SK-N-SH (cell line): ENCODE measurements at regions of chr11 and their contacts with region 1.

Region 1: GRCh38 chr11:117946842-117947526 is 17.8 kb upstream of the TMPRSS13 start:
- DNase-seq: peak; percentile 85
- H3K4me3 ChIP-seq: peak overlapping the region in 1 of 2 experiments; percentile 39; a peak in 1 of 4 replicates
- H3K27ac ChIP-seq: no peak overlapping the region
- H3K4me1 ChIP-seq: no peaks in the 10 kb centered on the region; a peak in 1 of 4 replicates
- H3K27me3 ChIP-seq: no peaks in the 10 kb centered on the region; the same call in 1 of the 2 replicates
- CTCF ChIP-seq: peak; percentile 96
- EP300 ChIP-seq: no peak
- RAD21 ChIP-seq: peak; percentile 99

Region 2: DNA sequence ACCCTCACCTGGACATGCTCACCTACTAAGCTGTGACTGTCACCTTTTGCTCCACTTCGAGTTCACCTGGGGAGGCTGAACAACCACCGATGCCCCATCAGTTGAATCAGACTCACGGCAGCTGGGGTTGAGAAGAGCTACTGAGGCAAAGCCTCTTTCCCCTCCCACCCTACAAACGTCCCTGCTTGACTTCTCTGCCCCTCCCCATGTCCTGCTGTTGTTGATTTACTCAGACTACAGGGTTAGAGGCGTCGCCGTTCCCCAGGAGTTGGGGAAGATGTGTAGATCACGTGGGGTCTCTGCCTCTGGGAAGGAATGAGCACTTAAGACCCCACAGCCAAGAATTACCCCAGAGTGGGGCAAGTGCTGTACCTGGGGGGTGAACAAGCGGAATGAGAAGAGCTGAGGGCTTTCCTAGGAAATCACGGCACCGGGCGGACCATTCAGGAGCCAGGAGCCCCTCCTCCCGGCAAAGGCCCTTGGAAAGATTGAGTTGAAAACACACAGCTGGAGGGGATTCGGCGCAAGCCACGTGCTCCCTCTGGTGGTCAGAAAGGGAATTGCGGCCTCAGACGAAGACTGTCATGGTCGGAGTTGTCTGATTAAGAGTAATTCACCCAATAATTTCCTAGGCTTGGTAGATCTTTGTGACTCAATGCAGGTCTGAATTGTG is 129.5 kb before region 1 on chr11:
- CTCF ChIA-PET with region 1: interaction called, 481 read pairs
- POLR2A ChIA-PET with region 1: no interaction called
- DNase-seq: peak; percentile 83
- H3K4me3 ChIP-seq: peak overlapping the region in 1 of 2 experiments; percentile 33; a peak in 1 of 4 replicates
- H3K27ac ChIP-seq: no peak overlapping the region
- H3K4me1 ChIP-seq: peaks cover 8 to 28% of the 10 kb centered on the region in 2 experiments; a peak in 2 of 4 replicates
- H3K27me3 ChIP-seq: no peaks in the 10 kb centered on the region
- CTCF ChIP-seq: peak; percentile 98
- EP300 ChIP-seq: no peak
- RAD21 ChIP-seq: peak; percentile 92

Region 3: DNA sequence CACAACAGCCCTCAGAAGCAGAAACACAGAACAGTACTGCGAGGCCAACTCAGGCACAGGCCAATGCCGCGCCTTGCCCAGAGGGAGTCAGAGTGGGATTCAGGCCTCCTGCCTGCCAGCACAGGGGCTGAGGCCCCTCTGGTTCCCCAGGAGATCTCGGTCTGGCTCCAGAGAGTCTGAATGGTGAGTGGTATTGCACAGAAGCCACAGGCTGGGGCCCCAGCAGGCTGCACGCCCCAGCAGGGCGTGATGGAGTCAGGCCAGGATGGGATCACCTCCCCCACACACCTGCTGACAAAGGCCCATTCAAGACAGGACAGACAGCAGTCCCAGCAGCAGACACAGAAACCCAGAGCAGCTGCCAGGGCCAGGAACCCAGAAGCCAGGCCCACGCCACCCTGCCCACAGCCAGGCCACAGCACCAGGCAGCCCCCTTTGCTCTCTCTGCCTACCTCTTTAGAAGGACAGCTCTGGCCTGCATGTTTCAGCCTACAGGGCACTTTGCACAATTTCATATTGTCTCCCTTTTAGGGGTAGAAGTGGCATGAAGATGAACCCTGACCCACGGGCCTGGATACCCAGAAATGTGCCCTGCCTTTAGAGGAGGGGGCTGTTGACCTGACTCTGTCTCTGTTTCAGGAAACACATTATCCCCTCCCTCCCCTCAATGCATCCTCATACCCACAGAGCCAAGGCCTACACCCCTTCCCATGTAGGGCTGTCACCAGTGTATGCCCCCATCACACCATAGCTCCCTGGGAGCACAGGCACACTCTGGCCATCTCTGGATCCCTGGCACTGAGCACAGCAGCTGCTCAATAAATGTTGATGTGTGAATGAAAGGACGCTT is 76.7 kb before region 1 on chr11:
- CTCF ChIA-PET with region 1: interaction called, 31 read pairs
- POLR2A ChIA-PET with region 1: no interaction called
- DNase-seq: peak; percentile 52
- H3K4me3 ChIP-seq: no peak overlapping the region
- H3K27ac ChIP-seq: peak overlapping the region in 1 of 2 experiments; percentile 81; a peak in 2 of 4 replicates
- H3K4me1 ChIP-seq: peaks cover 0 to 48% of the 10 kb centered on the region in 2 experiments; a peak in 1 of 4 replicates
- H3K27me3 ChIP-seq: peaks cover 17% of the 10 kb centered on the region; the same call in 1 of the 2 replicates
- CTCF ChIP-seq: no peak
- EP300 ChIP-seq: no peak
- RAD21 ChIP-seq: no peak

Region 4: GRCh38 chr11:117907251-117907981 is 39.6 kb before region 1 on chr11:
- CTCF ChIA-PET with region 1: interaction called, 36 read pairs
- POLR2A ChIA-PET with region 1: no interaction called
- DNase-seq: peak; percentile 74
- H3K4me3 ChIP-seq: no peak overlapping the region
- H3K27ac ChIP-seq: no peak overlapping the region
- H3K4me1 ChIP-seq: peaks cover 5 to 24% of the 10 kb centered on the region in 2 experiments; a peak in 2 of 4 replicates
- H3K27me3 ChIP-seq: peaks cover 6% of the 10 kb centered on the region; the same call in 1 of the 2 replicates
- CTCF ChIP-seq: no peak
- EP300 ChIP-seq: no peak
- RAD21 ChIP-seq: no peak

Region 5: GRCh38 chr11:117959438-117960149 is 12.6 kb after region 1 on chr11:
- CTCF ChIA-PET with region 1: interaction called, 21 read pairs
- POLR2A ChIA-PET with region 1: no interaction called
- DNase-seq: no peak
- H3K4me3 ChIP-seq: no peak overlapping the region
- H3K27ac ChIP-seq: no peak overlapping the region
- H3K4me1 ChIP-seq: no peaks in the 10 kb centered on the region
- H3K27me3 ChIP-seq: no peaks in the 10 kb centered on the region
- CTCF ChIP-seq: no peak
- EP300 ChIP-seq: no peak
- RAD21 ChIP-seq: no peak

Region 6: DNA sequence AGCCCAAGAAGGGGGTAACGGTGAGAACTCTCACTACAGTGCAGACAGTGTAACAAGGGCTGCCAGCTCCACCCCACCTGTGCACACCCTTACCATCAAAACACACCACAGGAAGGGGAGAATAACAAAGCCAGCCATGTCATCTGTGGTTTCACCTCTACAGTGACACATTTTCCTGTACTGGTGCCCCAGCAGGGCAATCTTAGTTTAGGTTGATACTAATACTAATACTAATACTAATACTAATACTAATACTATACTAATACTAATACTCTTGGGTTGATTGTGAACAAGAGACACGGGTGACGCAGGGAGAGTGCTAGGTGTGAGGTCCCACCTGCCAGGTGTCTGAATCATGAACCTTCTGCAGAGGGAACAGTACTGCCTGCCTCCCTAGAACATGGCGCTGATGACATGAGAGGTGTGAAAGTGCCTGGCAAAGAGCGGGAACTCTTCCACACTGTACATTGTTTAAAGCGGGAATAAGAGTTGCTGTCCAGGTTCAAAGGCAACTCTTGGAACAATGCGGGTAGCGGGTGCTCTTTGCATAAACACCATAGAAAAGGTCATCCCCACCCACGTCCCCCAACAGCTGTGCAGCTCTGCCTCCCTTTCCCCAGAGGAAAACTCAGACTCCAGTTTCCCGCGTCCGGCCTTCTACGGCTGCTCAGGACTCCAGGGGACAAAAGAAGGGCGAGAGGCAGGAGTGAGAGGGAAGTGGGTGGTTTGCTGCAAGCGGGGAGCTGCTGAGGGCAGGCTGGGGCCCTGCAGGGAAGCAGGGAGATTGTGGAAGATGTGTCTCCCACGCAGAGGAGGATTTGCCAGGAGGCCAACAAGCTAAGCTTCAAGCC is 104.9 kb after region 1 on chr11:
- CTCF ChIA-PET with region 1: interaction called, 173 read pairs
- POLR2A ChIA-PET with region 1: interaction called, 3 read pairs
- DNase-seq: no peak
- H3K4me3 ChIP-seq: no peak overlapping the region
- H3K27ac ChIP-seq: no peak overlapping the region
- H3K4me1 ChIP-seq: no peaks in the 10 kb centered on the region
- H3K27me3 ChIP-seq: peaks cover 8% of the 10 kb centered on the region; the same call in 1 of the 2 replicates
- CTCF ChIP-seq: no peak
- EP300 ChIP-seq: no peak
- RAD21 ChIP-seq: no peak

Region 7: GRCh38 chr11:118164885-118165284 is 217.9 kb after region 1 on chr11:
- CTCF ChIA-PET with region 1: no interaction called
- POLR2A ChIA-PET with region 1: no interaction called
- DNase-seq: no peak
- H3K4me3 ChIP-seq: no peak overlapping the region
- H3K27ac ChIP-seq: no peak overlapping the region
- H3K4me1 ChIP-seq: no peaks in the 10 kb centered on the region
- H3K27me3 ChIP-seq: peaks cover 38% of the 10 kb centered on the region
- CTCF ChIP-seq: no peak
- EP300 ChIP-seq: no peak
- RAD21 ChIP-seq: no peak